H1 (cell line): ENCODE measurements at regions of chr2 and their contacts with region 1.

Region 1: DNA sequence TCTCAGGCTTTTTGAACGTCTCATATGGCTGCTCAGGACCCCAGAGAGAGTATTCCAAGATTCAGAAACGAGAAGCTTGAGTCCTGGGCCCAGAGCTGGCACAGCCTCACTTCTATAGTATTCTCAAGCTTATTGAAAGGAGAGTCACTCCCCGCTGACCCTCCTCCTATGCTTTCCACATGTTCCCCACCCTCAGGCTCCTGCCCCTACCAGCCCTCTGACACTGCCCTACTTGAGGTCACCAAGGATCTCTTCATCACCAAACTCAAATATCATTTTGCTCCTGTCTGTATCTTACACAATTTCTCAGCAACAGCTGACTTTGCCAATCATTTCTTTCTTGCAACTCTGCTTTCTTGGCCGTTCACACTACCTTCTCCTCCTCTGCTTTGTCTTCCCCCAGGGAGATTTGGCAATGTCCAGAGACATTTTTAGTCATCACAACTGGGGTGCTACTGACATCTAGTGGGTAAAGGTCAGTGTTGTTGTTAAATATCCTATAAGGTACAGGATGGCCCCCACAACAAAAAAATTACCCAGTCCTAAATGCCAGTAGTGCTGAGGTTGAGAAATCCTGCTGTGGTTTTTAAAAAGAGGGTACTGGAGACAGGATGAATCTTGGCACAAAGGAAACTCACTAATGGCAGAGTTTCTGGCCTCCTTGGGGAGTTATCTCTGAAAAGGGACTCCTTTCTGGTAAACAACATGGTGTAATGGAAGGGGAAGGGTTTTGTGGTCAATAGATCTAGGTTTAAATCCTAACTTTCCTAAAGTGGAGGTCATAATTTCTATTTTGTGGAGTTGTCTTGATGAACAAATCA is 26.9 kb upstream of the INSIG2 start:
- DNase-seq: no peak
- H3K4me3 ChIP-seq: no peak overlapping the region
- H3K27ac ChIP-seq: no peak overlapping the region
- H3K4me1 ChIP-seq: no peaks in the 10 kb centered on the region
- H3K27me3 ChIP-seq: peaks cover 0 to 2% (median 0%) of the 10 kb centered on the region in 4 experiments; a peak in 1 of 7 replicates
- CTCF ChIP-seq: peak in 2 of 3 experiments; percentile 52 to 60; a peak in 3 of 4 replicates
- EP300 ChIP-seq: no peak
- POLR2A ChIP-seq: no peak
- RAD21 ChIP-seq: peak; percentile 77 to 80

Region 2: DNA sequence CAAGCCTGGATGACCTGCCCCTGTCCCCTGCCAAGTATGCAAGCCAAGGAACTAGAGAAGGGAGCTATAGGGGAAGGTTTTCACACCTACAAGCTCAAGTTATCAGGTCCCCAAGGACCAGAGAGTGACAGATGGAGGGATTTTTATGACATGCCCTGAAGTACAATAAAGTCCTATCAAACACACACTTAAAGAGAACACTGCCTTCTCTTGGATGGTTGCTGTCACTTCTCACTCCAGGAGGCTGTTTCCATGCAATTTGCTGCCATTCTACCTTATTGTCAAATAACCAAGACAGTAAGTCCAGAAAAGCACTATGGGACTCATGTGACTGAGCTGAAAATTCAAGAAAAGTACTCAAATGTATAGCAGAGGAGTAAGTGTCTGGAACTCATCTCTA is 323.5 kb before region 1 on chr2:
- CTCF ChIA-PET with region 1: no interaction called
- POLR2A ChIA-PET with region 1: no interaction called
- DNase-seq: no peak
- H3K4me3 ChIP-seq: no peak overlapping the region
- H3K27ac ChIP-seq: no peak overlapping the region
- H3K4me1 ChIP-seq: no peaks in the 10 kb centered on the region
- H3K27me3 ChIP-seq: no peaks in the 10 kb centered on the region
- CTCF ChIP-seq: no peak
- EP300 ChIP-seq: no peak
- POLR2A ChIP-seq: no peak
- RAD21 ChIP-seq: no peak

Region 3: GRCh38 chr2:118032169-118033013 is 29.0 kb before region 1 on chr2:
- CTCF ChIA-PET with region 1: interaction called, 11 read pairs
- POLR2A ChIA-PET with region 1: no interaction called
- DNase-seq: peak in 1 of 2 experiments; percentile 52
- H3K4me3 ChIP-seq: no peak overlapping the region
- H3K27ac ChIP-seq: no peak overlapping the region
- H3K4me1 ChIP-seq: peaks cover 0 to 8% (median 1%) of the 10 kb centered on the region in 4 experiments; a peak in 2 of 7 replicates
- H3K27me3 ChIP-seq: peaks cover 0 to 1% (median 0%) of the 10 kb centered on the region in 4 experiments; a peak in 1 of 7 replicates
- CTCF ChIP-seq: peak in 2 of 3 experiments; percentile 55 to 83; a peak in 3 of 4 replicates
- EP300 ChIP-seq: no peak
- POLR2A ChIP-seq: no peak
- RAD21 ChIP-seq: peak; percentile 43 to 55

Region 4: DNA sequence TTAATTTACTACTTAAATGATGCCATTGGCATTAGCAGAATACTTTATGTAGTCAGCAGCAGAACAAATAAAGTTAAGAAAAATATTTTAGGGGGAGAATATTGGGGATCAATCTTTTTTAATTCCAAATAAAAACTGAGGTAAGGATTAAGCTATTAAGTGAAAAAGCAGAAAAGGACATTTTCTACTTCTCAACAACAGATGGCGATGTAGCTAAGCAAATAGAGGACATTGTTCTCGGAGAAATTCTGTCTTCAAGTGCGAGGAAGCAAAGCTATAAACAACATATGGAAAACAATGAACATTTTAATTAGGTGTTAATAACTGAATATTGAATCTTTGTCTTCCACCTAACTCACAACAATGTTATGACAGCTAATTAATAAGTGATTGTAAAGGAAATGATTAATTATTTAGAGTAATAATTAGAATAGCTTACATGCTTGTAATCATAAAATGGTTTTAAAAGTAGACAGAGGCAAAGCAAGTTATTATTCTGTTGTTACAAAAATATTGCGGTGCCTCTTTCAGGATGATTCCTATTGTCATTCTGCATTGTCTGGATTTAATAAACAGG is 14.6 kb before region 1 on chr2:
- CTCF ChIA-PET with region 1: interaction called, 147 read pairs
- POLR2A ChIA-PET with region 1: no interaction called
- DNase-seq: no peak
- H3K4me3 ChIP-seq: no peak overlapping the region
- H3K27ac ChIP-seq: no peak overlapping the region
- H3K4me1 ChIP-seq: peaks cover 0 to 2% (median 0%) of the 10 kb centered on the region in 4 experiments; a peak in 2 of 7 replicates
- H3K27me3 ChIP-seq: no peaks in the 10 kb centered on the region
- CTCF ChIP-seq: peak in 2 of 3 experiments; percentile 49 to 60; a peak in 2 of 4 replicates
- EP300 ChIP-seq: no peak
- POLR2A ChIP-seq: no peak
- RAD21 ChIP-seq: peak; percentile 73 to 79

Region 5: GRCh38 chr2:118077636-118078247 is 16.4 kb after region 1 on chr2:
- CTCF ChIA-PET with region 1: interaction called, 12 read pairs
- POLR2A ChIA-PET with region 1: interaction called, 5 read pairs
- DNase-seq: no peak
- H3K4me3 ChIP-seq: no peak overlapping the region
- H3K27ac ChIP-seq: no peak overlapping the region
- H3K4me1 ChIP-seq: no peaks in the 10 kb centered on the region
- H3K27me3 ChIP-seq: no peaks in the 10 kb centered on the region
- CTCF ChIP-seq: no peak
- EP300 ChIP-seq: no peak
- POLR2A ChIP-seq: no peak
- RAD21 ChIP-seq: no peak

Region 6: DNA sequence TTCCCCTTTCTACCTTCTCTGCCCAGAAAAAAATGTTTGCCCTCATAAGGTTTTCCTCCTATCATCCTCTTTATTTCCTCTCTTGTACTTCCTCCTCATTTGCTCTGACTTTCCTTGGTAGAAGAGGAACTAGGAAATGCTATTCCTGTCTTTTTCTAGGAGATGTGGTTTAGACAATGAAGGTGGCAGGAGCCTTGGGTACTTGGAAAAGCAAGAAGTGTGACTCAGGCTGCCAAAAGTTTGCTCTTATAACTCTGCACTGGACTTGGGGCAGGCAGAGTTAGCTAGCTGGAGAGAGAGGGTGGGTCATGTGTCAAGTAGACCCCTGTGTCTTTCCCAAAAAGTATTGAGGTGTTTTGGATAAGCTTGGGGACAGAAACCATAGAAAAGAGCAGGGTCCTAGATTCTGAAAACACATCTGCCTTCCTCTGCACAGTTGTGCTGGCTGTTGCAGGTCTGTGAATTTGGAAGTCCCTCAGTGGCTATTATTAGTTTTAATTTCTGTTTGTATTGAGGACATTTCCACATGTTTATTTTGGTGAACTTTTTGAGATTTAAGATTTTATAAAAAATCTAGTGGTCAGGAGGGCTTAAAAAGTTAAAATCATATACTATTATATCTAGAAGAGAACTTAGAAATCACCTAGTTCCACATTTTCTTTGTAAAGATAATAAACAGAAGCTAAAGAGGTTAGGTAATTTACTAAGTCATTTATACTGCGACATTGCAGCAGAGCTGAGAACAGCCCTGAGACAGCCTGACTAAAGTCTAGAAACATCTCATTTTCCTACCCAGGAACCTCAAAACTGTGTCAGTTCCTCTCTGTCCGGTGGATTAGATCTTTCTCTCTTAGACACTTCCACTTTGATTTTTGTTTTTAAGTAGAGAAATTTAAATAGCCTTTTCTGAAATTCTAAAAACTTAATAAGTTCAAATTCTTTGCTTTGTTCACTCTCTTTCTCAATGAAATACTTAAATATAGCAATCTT is 42.9 kb after region 1 on chr2:
- CTCF ChIA-PET with region 1: no interaction called
- POLR2A ChIA-PET with region 1: no interaction called
- DNase-seq: no peak
- H3K4me3 ChIP-seq: no peak overlapping the region
- H3K27ac ChIP-seq: no peak overlapping the region
- H3K4me1 ChIP-seq: no peaks in the 10 kb centered on the region
- H3K27me3 ChIP-seq: no peaks in the 10 kb centered on the region
- CTCF ChIP-seq: no peak
- EP300 ChIP-seq: no peak
- POLR2A ChIP-seq: no peak
- RAD21 ChIP-seq: no peak

Region 7: GRCh38 chr2:118154176-118154575 is 92.8 kb after region 1 on chr2:
- CTCF ChIA-PET with region 1: no interaction called
- POLR2A ChIA-PET with region 1: no interaction called
- DNase-seq: no peak
- H3K4me3 ChIP-seq: no peak overlapping the region
- H3K27ac ChIP-seq: no peak overlapping the region
- H3K4me1 ChIP-seq: no peaks in the 10 kb centered on the region
- H3K27me3 ChIP-seq: no peaks in the 10 kb centered on the region
- CTCF ChIP-seq: no peak
- EP300 ChIP-seq: no peak
- POLR2A ChIP-seq: no peak
- RAD21 ChIP-seq: no peak

Region 8: GRCh38 chr2:118190474-118190873 is 129.1 kb after region 1 on chr2:
- CTCF ChIA-PET with region 1: no interaction called
- POLR2A ChIA-PET with region 1: no interaction called
- DNase-seq: no peak
- H3K4me3 ChIP-seq: no peak overlapping the region
- H3K27ac ChIP-seq: no peak overlapping the region
- H3K4me1 ChIP-seq: peaks cover 0 to 6% (median 4%) of the 10 kb centered on the region in 4 experiments; a peak in 6 of 7 replicates
- H3K27me3 ChIP-seq: peaks cover 0 to 2% (median 0%) of the 10 kb centered on the region in 4 experiments; a peak in 1 of 7 replicates
- CTCF ChIP-seq: no peak
- EP300 ChIP-seq: no peak
- POLR2A ChIP-seq: no peak
- RAD21 ChIP-seq: no peak